Activated CD4-positive, alpha-beta T cell treated with anti-CD3 and anti-CD28 coated beads, Interleukin-2, amount 10 ng/mL, durations not matched to agents 24 days and 14 days (primary cell): ENCODE measurements at regions of chr6 and their contacts with region 1.

Region 1: DNA sequence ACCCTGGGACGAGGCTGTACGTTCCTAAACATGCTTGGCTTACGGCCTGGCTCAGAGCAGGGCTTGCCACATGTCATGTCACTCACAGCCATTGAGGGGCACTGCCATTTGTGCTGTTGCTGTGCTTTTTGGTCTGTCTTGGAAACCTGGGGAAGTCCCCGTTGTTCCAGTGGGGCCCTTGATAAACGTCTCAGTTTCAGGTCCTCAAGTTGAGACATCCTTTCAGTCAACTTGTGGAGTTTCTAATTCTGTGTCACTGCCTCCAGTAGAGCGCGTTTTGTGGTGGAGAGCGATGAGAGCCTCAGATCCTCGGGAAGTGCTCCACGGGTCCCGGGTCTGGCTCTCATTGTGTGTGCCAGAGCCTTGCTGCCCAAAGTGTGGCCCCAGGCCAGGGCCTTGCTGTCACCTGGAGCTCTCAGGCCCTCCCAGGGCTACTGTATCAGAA is 43.0 kb upstream of the CCR6 start:
- DNase-seq: peak; percentile 73
- H3K4me3 Mint-ChIP-seq: no peak overlapping the region
- H3K27ac Mint-ChIP-seq: peak overlapping the region; percentile 34
- H3K4me1 Mint-ChIP-seq: peaks cover 15% of the 10 kb centered on the region
- H3K27me3 Mint-ChIP-seq: peaks cover 15% of the 10 kb centered on the region

Region 2: DNA sequence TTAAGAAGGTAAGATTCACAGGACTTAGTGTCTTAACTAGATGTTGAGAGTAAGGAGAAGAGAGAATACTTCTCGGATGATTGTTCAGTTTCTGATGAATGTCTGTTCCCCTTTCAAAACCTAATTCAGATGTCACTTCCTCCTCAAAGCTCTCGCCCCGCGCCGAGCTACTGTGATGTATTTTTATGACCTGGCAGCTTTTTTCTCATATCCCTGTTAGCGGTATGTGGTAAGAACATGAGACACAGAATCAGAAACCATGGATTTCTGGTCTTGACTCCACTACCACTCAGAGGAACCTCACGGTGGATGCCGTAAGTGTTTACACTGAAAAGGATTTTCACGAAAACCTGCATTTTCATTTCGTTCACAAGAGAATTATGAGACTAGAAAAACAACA is 32.3 kb before region 1 on chr6:
- intact Hi-C with region 1: loop called (anchors 2 kb)
- DNase-seq: peak; percentile 81
- H3K4me3 Mint-ChIP-seq: peak overlapping the region; percentile 35
- H3K27ac Mint-ChIP-seq: peak overlapping the region; percentile 74
- H3K4me1 Mint-ChIP-seq: peaks cover 21% of the 10 kb centered on the region
- H3K27me3 Mint-ChIP-seq: no peaks in the 10 kb centered on the region

Region 3: GRCh38 chr6:168526841-168527281 is 1447.0 kb after region 1 on chr6:
- intact Hi-C with region 1: no loop called
- DNase-seq: no peak
- H3K4me3 Mint-ChIP-seq: no peak overlapping the region
- H3K27ac Mint-ChIP-seq: no peak overlapping the region
- H3K4me1 Mint-ChIP-seq: no peaks in the 10 kb centered on the region
- H3K27me3 Mint-ChIP-seq: no peaks in the 10 kb centered on the region